CD14-positive monocyte (primary cell): ENCODE measurements at regions of chr2 and their contacts with region 1.

Region 1: GRCh38 chr2:174259981-174260380 is 11.6 kb upstream of the OLA1 start:
- DNase-seq: peak in 2 of 3 donors; percentile 10 to 50
- H3K4me3 ChIP-seq: no peak overlapping the region
- H3K4me3 Mint-ChIP-seq: no peak overlapping the region
- H3K27ac ChIP-seq: no peak overlapping the region
- H3K27ac Mint-ChIP-seq: no peak overlapping the region
- H3K4me1 ChIP-seq: peaks cover 5% of the 10 kb centered on the region in 2 donors
- H3K4me1 Mint-ChIP-seq: peaks cover 10% of the 10 kb centered on the region
- H3K27me3 ChIP-seq: no peaks in the 10 kb centered on the region
- H3K27me3 Mint-ChIP-seq: peaks cover 2 to 5% (median 2%) of the 10 kb centered on the region in 3 donors
- CTCF ChIP-seq: no peak

Region 2: DNA sequence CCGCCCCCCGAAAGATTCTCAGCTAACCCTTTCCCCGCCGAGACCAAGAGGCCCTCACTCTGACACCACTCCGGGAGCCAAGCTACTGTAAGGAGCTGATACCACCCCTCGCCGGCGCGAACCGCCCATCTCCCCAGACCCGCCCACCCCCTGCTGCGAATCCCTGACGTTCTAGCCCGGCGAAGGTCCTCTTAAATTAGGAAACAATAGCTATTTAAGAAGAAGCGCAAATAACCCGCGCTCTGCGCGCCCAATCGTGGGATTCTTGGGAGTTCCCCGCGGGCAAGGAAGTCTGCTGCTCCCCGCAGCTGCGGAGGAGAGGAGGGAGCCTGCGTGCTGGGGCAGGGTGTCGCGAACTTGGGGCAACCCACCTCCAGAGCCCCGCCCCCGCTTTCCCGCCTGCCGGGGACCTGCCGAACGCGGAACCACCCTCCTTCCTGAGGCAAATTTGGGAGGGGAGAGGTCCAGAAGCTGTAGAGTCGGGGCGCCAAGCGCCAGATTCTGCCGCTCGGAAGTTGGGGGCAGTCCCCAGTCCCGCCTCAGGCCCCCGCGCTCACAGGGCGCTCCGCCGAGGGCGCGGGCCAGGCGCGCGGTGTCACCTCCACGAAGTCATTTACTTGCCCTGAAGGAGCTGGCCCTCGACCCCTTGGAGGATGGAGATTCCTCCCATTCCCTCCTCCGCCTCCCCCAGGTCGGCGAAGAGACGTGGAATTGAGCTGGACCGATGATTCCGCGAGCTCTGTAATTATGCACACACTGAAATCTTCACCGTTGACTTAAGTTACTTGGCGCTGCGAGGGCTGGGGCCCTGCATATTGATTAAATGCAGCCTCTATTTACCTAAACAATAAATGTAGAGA is 66.4 kb after region 1 on chr2:
- intact Hi-C with region 1: loop called in 1 of 2 experiments (anchors 10 kb)
- DNase-seq: peak in 2 of 3 donors; percentile 36 to 42
- H3K4me3 ChIP-seq: peak overlapping the region; percentile 33 to 85 (median 45)
- H3K4me3 Mint-ChIP-seq: peak overlapping the region; percentile 95 to 99
- H3K27ac ChIP-seq: no peak overlapping the region
- H3K27ac Mint-ChIP-seq: peak overlapping the region in 3 of 7 donors; percentile 50 to 80 (median 78)
- H3K4me1 ChIP-seq: peaks cover 30 to 32% of the 10 kb centered on the region in 2 donors
- H3K4me1 Mint-ChIP-seq: peaks cover 34% of the 10 kb centered on the region
- H3K27me3 ChIP-seq: peaks cover 48 to 80% of the 10 kb centered on the region in 2 donors
- H3K27me3 Mint-ChIP-seq: peaks cover 80 to 92% (median 88%) of the 10 kb centered on the region in 3 donors
- CTCF ChIP-seq: no peak